ENCODE measurements at regions of chr11 and their contacts with region 1.

Region 1: DNA sequence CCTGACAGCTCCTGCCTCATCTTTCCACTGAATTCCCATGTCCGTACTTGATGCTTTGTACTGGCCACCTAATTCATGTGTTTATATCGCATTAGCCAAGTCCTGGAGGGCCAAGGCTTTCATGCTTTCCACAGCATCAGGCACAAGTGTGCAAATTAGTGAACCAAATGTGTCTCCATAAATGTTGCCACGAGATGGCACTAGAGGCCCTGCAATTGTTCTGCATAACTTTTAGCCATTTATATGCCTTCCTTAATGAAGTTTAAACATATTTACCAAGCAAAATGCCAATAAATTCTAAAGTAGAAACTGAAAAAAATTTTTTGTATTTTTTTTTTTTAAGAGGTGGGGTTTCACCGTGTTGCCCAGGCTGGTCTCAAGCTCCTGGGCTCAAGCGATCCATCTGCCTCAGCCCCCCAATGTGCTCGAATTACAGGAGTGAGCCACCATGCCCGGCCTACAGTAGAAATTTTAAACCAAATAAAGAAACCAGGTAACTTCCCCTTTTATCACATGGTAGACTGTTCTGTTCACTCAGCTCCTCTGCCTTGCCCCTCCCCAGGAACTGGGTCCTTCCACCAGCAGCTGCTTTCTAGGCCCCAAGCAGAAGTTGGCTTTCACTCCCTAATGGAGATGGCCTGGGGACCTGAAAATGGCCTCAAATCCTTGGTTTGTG is 20.8 kb upstream of the IL18BP start:
- DNase-seq: peak in 1 of 3 donors; percentile 43
- ATAC-seq: peak; percentile 49 to 67
- H3K4me3 ChIP-seq: no peak overlapping the region
- H3K27ac ChIP-seq: no peak overlapping the region
- H3K4me1 ChIP-seq: no peaks in the 10 kb centered on the region
- H3K27me3 ChIP-seq: no peaks in the 10 kb centered on the region

Region 2: DNA sequence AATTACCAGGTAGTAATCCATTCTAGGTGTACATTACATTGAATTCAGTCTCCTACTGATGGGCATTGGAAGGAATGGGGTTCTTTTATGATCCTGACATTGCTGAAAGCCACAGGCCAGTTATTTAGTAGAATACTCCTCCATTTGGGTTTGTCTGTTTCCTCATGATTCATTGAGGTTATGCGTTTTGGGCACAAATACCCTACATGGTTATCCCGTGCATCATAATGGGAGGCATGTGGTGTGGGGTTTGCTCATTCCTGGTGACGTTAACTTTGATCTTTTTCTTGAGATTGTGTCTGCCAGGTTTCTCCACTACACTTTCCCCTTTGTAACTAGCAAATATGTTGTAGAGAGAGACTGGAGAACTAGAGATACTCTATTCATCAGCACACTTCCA is 163.2 kb after region 1 on chr11:
- intact Hi-C with region 1: loop called in 1 of 4 experiments (anchors 5 kb)
- DNase-seq: no peak
- ATAC-seq: no peak
- H3K4me3 ChIP-seq: no peak overlapping the region
- H3K27ac ChIP-seq: no peak overlapping the region
- H3K4me1 ChIP-seq: no peaks in the 10 kb centered on the region
- H3K27me3 ChIP-seq: no peaks in the 10 kb centered on the region

Region 3: DNA sequence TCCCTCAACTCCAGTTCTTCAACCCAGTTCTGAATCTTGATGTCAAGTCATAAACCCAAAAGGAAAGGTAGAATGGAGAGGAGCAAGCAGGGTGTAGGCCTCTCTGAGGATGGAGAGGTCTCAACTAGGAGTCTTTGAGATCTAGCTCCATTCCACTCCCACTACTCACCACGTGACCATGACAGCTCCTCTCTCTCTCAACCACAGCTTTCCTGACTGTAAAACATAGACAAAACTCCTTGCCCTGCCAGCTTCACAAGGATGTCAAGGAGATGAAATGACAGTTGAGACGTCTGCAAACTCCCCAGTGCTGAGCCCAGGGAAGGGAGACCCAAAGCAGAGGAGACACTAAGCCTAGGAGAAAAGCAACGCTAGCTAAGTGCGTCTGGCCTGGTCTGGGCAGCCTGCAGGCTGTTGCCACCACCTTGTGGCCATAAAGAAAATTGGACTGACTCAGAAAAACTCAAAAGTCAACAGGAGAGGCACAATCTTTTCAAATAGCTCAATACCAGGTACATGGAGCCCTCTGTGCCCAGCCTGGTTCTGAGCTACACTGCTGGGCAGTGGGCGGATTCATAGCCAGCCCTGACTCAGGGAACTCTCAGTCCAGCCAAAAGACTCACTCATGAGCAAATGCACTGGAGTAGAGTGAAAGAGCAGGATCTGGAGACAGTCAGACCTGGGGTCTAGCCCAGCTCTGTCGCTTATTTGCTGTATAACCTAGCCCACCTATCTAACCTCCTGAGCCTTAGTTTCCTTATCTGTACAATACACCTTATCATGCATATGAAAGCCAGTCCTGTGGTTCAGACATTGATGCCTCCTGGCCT is 453.1 kb after region 1 on chr11:
- intact Hi-C with region 1: loop called in 1 of 4 experiments (anchors 5 kb)
- DNase-seq: peak in 2 of 3 donors; percentile 36 to 57
- ATAC-seq: no peak
- H3K4me3 ChIP-seq: no peak overlapping the region
- H3K27ac ChIP-seq: no peak overlapping the region
- H3K4me1 ChIP-seq: no peaks in the 10 kb centered on the region
- H3K27me3 ChIP-seq: no peaks in the 10 kb centered on the region